B cell (primary cell): ENCODE measurements at regions of chr11 and their contacts with region 1.

Region 1: GRCh38 chr11:72722050-72722748 is 30.0 kb downstream of the ARAP1 start:
- DNase-seq: peak; percentile 93
- ATAC-seq: peak; percentile 85
- H3K4me3 ChIP-seq: peak overlapping the region; percentile 36 to 74 (median 50)
- H3K4me3 Mint-ChIP-seq: peak overlapping the region; percentile 95
- H3K27ac ChIP-seq: peak overlapping the region; percentile 65 to 81
- H3K27ac Mint-ChIP-seq: peak overlapping the region; percentile 94
- H3K4me1 ChIP-seq: peaks cover 55 to 77% of the 10 kb centered on the region in 2 donors
- H3K4me1 Mint-ChIP-seq: peaks cover 76% of the 10 kb centered on the region
- H3K27me3 ChIP-seq: no peaks in the 10 kb centered on the region
- H3K27me3 Mint-ChIP-seq: no peaks in the 10 kb centered on the region
- CTCF ChIP-seq: no peak

Region 2: GRCh38 chr11:72683782-72684200 is 38.4 kb before region 1 on chr11:
- CTCF ChIA-PET with region 1: interaction called, 7 read pairs
- POLR2A ChIA-PET with region 1: no interaction called
- intact Hi-C with region 1: loop called (anchors 5 kb)
- DNase-seq: peak; percentile 76
- ATAC-seq: peak; percentile 74
- H3K4me3 ChIP-seq: no peak overlapping the region
- H3K4me3 Mint-ChIP-seq: no peak overlapping the region
- H3K27ac ChIP-seq: peak overlapping the region in 1 of 2 donors; percentile 11
- H3K27ac Mint-ChIP-seq: no peak overlapping the region
- H3K4me1 ChIP-seq: no peaks in the 10 kb centered on the region
- H3K4me1 Mint-ChIP-seq: peaks cover 6% of the 10 kb centered on the region
- H3K27me3 ChIP-seq: no peaks in the 10 kb centered on the region
- H3K27me3 Mint-ChIP-seq: no peaks in the 10 kb centered on the region
- CTCF ChIP-seq: peak; percentile 95

Region 3: GRCh38 chr11:72743321-72744221 is 21.4 kb after region 1 on chr11:
- CTCF ChIA-PET with region 1: interaction called, 142 read pairs
- POLR2A ChIA-PET with region 1: interaction called, 6 read pairs
- intact Hi-C with region 1: loop called (anchors 1 kb)
- DNase-seq: peak; percentile 90
- ATAC-seq: peak; percentile 81
- H3K4me3 ChIP-seq: no peak overlapping the region
- H3K4me3 Mint-ChIP-seq: peak overlapping the region; percentile 69
- H3K27ac ChIP-seq: peak overlapping the region; percentile 97 to 99
- H3K27ac Mint-ChIP-seq: peak overlapping the region; percentile 91
- H3K4me1 ChIP-seq: peaks cover 87 to 94% of the 10 kb centered on the region in 2 donors
- H3K4me1 Mint-ChIP-seq: peaks cover 89% of the 10 kb centered on the region
- H3K27me3 ChIP-seq: no peaks in the 10 kb centered on the region
- H3K27me3 Mint-ChIP-seq: no peaks in the 10 kb centered on the region
- CTCF ChIP-seq: no peak

Region 4: GRCh38 chr11:72799441-72799840 is 77.2 kb after region 1 on chr11:
- CTCF ChIA-PET with region 1: interaction called, 390 read pairs
- POLR2A ChIA-PET with region 1: interaction called, 35 read pairs
- intact Hi-C with region 1: no loop called
- DNase-seq: no peak
- ATAC-seq: no peak
- H3K4me3 ChIP-seq: no peak overlapping the region
- H3K4me3 Mint-ChIP-seq: no peak overlapping the region
- H3K27ac ChIP-seq: no peak overlapping the region
- H3K27ac Mint-ChIP-seq: no peak overlapping the region
- H3K4me1 ChIP-seq: peaks cover 6 to 11% of the 10 kb centered on the region in 2 donors
- H3K4me1 Mint-ChIP-seq: peaks cover 8% of the 10 kb centered on the region
- H3K27me3 ChIP-seq: no peaks in the 10 kb centered on the region
- H3K27me3 Mint-ChIP-seq: no peaks in the 10 kb centered on the region
- CTCF ChIP-seq: no peak

Region 5: DNA sequence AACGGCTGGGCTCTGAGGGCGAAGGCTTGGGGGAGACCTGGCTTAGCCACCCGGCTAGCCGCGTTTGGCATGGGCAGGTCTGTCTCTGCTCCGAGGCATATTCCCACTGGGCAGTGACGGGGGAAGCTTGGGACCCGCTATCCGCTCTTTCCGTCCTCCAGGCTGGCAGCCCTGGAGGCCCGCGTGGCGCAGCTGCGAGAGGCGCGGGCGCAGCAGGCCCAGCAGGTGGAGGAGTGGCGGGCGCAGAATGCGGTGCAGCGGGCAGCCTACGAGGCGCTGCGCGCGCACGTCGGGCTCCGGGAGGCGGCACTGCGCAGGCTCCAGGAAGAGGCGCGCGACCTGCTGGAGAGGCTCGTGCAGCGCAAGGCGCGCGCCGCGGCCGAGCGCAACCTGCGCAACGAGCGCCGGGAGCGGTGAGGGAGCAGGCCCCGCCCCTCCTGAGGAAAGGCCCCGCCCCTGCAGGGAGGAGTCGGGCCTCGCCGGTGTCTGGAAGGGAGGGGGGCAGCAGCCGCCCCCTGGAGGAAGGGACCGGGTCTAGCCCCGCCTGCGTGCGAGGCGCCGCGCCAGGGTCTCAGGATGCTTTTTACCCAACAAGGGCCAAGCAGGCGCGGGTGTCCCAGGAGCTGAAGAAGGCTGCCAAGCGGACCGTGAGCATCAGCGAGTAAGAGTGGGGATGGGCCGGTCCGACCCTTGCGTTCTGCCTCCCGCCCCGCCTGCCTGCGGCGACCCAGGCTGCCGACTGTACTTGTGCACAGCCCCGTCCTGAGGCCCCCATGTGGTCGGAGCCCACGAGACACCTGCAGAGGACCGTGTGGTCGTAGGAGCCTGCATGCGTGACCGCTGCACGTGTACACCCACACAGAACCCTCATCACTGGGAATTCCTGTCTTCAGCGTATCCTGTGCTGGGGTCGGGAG is 99.9 kb after region 1 on chr11:
- CTCF ChIA-PET with region 1: interaction called, 51 read pairs
- POLR2A ChIA-PET with region 1: interaction called, 6 read pairs
- intact Hi-C with region 1: loop called (anchors 1 kb)
- DNase-seq: peak; percentile 90
- ATAC-seq: peak; percentile 84
- H3K4me3 ChIP-seq: peak overlapping the region in 3 of 5 experiments; percentile 29 to 44 (median 43)
- H3K4me3 Mint-ChIP-seq: peak overlapping the region; percentile 69
- H3K27ac ChIP-seq: peak overlapping the region; percentile 59 to 86
- H3K27ac Mint-ChIP-seq: peak overlapping the region; percentile 95
- H3K4me1 ChIP-seq: peaks cover 16 to 33% of the 10 kb centered on the region in 2 donors
- H3K4me1 Mint-ChIP-seq: peaks cover 52% of the 10 kb centered on the region
- H3K27me3 ChIP-seq: no peaks in the 10 kb centered on the region
- H3K27me3 Mint-ChIP-seq: no peaks in the 10 kb centered on the region
- CTCF ChIP-seq: peak; percentile 52